ENCODE measurements at regions of chr16 and their contacts with region 1.

Region 1: GRCh38 chr16:28823872-28824716 is 1.3 kb downstream of the ATXN2L start:
- DNase-seq: peak; percentile 97
- ATAC-seq: peak; percentile 91
- H3K4me3 ChIP-seq: peak overlapping the region; percentile 77 to 99 (median 89)
- H3K27ac ChIP-seq: peak overlapping the region; percentile 97
- H3K4me1 ChIP-seq: peaks cover 52% of the 10 kb centered on the region
- H3K27me3 ChIP-seq: no peaks in the 10 kb centered on the region; a peak in 1 of 5 replicates
- CTCF ChIP-seq: peak; percentile 57
- EP300 ChIP-seq: peak in 1 of 2 experiments; percentile 6; a peak in 1 of 4 replicates
- POLR2A ChIP-seq: peak; percentile 71 to 76
- RAD21 ChIP-seq: no peak

Region 2: GRCh38 chr16:28258567-28258966 is 565.5 kb before region 1 on chr16:
- CTCF ChIA-PET with region 1: no interaction called
- POLR2A ChIA-PET with region 1: no interaction called
- in situ Hi-C with region 1: no loop called
- intact Hi-C with region 1: no loop called
- DNase-seq: no peak
- ATAC-seq: no peak; the same call in 1 of the 3 replicates
- H3K4me3 ChIP-seq: no peak overlapping the region
- H3K27ac ChIP-seq: no peak overlapping the region
- H3K4me1 ChIP-seq: no peaks in the 10 kb centered on the region
- H3K27me3 ChIP-seq: peaks cover 8 to 53% of the 10 kb centered on the region in 2 experiments; a peak in 4 of 5 replicates
- CTCF ChIP-seq: no peak
- EP300 ChIP-seq: no peak
- POLR2A ChIP-seq: no peak
- RAD21 ChIP-seq: no peak

Region 3: GRCh38 chr16:28835867-28836744 is 12.0 kb after region 1 on chr16:
- CTCF ChIA-PET with region 1: no interaction called
- POLR2A ChIA-PET with region 1: interaction called, 56 read pairs
- in situ Hi-C with region 1: no loop called
- intact Hi-C with region 1: no loop called
- DNase-seq: no peak
- ATAC-seq: peak; percentile 2; the same call in 2 of the 3 replicates
- H3K4me3 ChIP-seq: no peak overlapping the region
- H3K27ac ChIP-seq: no peak overlapping the region
- H3K4me1 ChIP-seq: peaks cover 20% of the 10 kb centered on the region
- H3K27me3 ChIP-seq: no peaks in the 10 kb centered on the region
- CTCF ChIP-seq: no peak
- EP300 ChIP-seq: no peak
- POLR2A ChIP-seq: peak; percentile 12 to 41; a peak in 2 of 4 replicates
- RAD21 ChIP-seq: no peak

Region 4: DNA sequence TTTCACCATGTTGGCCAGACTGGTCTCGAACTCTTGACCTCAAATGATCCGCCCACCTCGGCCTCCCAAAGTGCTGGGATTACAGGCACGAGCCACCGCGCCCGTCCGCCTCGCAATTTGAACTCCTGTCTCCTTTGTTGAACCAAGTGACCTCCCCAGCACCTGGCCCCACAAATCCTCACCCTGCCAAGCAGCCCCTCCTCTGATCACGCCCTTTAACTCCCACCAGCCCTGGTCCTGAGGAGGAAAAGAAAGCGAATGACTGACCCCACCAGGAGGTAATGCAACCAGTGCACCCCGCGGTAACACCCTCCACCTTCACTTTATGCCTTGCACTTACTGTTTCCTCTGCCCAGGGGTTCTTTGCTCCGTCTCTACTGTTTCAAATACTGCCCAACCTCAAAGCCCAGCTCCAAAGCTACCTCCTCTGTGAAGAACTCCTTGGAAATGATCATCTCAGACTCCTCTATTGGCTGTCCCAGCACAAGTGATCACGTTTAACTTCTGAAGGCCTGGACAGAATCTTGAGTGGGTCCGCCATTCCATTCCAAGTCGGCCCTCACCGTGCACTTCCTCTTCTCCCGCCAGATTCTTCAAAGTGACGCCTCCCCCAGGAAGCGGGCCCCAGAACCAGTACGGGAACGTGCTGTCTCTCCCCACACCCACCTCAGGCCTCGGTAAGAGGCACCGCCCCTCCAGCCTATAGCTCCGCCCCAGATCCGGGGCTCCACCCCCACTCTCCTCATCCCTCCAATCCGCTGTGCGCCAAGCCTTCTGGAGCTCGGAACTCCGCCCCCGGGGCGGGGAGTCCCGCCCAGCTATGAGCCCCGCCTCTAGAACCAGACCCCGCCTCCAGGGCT is 112.1 kb after region 1 on chr16:
- CTCF ChIA-PET with region 1: no interaction called
- POLR2A ChIA-PET with region 1: interaction called, 15 read pairs
- in situ Hi-C with region 1: no loop called
- intact Hi-C with region 1: loop called (anchors 5 kb)
- DNase-seq: peak; percentile 88
- ATAC-seq: peak; percentile 93
- H3K4me3 ChIP-seq: peak overlapping the region; percentile 28 to 69 (median 40)
- H3K27ac ChIP-seq: peak overlapping the region; percentile 43
- H3K4me1 ChIP-seq: peaks cover 63% of the 10 kb centered on the region
- H3K27me3 ChIP-seq: no peaks in the 10 kb centered on the region
- CTCF ChIP-seq: peak; percentile 47
- EP300 ChIP-seq: no peak
- POLR2A ChIP-seq: peak; percentile 19 to 40; a peak in 1 of 4 replicates
- RAD21 ChIP-seq: no peak

Region 5: DNA sequence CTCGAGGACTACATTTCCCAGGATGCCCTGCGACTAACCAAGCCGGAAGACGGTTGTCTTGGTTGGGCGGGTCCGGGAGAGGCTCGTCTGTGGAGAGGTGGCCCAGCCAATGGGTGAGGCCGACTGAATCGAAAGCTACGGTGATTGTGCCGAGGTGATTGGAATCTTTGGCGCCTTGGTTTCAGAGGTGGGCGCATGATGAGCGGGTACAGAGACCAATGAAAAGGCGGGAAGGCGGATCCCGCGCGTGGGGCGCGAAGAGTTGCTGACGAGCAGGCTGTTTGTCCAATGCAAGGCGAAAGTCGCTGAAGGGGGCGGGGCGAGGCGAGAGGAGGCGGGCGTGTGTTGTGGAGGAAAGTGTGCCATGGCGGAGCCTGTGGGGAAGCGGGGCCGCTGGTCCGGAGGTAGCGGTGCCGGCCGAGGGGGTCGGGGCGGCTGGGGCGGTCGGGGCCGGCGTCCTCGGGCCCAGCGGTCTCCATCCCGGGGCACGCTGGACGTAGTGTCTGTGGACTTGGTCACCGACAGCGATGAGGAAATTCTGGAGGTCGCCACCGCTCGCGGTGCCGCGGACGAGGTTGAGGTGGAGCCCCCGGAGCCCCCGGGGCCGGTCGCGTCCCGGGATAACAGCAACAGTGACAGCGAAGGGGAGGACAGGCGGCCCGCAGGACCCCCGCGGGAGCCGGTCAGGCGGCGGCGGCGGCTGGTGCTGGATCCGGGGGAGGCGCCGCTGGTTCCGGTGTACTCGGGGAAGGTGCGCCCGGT is 126.7 kb after region 1 on chr16 and contains the start of gene NFATC2IP:
- CTCF ChIA-PET with region 1: no interaction called
- POLR2A ChIA-PET with region 1: interaction called, 15 read pairs
- in situ Hi-C with region 1: no loop called
- intact Hi-C with region 1: no loop called
- DNase-seq: peak; percentile 100
- ATAC-seq: peak; percentile 97
- H3K4me3 ChIP-seq: peak within 1 kb of the TSS; percentile 93 to 99 (median 97)
- H3K27ac ChIP-seq: peak within 1 kb of the TSS; percentile 67
- H3K4me1 ChIP-seq: peaks cover 49% of the 10 kb centered on the region
- H3K27me3 ChIP-seq: no peaks in the 10 kb centered on the region; a peak in 1 of 5 replicates
- CTCF ChIP-seq: no peak
- EP300 ChIP-seq: no peak
- POLR2A ChIP-seq: peak; percentile 63 to 89
- RAD21 ChIP-seq: peak; percentile 28; the same call in 1 of the 2 replicates
- total RNA-seq, gene NFATC2IP: 18.2 and 32.1 TPM in 2 replicates

Region 6: DNA sequence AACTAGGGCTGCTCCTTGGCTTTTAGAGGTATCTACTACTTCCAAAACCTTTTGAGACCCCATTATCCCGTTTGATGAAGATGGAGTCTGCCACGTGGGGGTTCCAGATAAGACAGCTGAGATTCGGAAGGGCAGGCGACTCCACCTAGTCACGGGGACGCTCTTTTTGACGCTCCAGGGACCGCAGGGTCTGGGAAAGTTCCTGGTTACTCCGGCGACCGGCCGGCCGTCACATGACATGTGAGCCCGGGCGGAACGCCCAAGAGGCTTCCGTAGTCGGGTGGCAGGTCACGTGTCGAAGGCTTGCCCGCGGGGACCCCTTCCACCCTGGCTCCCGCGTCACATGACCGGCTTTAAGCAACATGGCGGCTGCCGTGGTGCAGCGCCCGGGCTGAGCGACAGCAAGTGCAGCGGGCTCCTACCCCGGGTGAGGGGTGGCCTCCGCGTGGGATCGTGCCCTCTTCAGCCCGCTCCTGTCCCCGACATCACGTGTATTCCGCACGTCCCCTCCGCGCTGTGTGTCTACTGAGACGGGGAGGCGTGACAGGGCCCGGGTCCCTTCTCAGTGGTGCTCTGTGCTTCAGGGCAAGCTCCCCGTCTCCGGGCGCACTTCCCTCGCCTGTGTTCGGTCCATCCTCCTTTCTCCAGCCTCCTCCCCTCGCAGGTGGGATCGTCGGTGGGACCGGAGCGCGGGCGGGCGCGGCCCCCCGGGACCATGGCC is 150.5 kb after region 1 on chr16 and contains the start of gene SPNS1:
- CTCF ChIA-PET with region 1: no interaction called
- POLR2A ChIA-PET with region 1: interaction called, 10 read pairs
- in situ Hi-C with region 1: no loop called
- intact Hi-C with region 1: no loop called
- DNase-seq: peak; percentile 94
- ATAC-seq: peak; percentile 91
- H3K4me3 ChIP-seq: peak within 1 kb of the TSS; percentile 93 to 100 (median 100)
- H3K27ac ChIP-seq: peak within 1 kb of the TSS; percentile 60
- H3K4me1 ChIP-seq: peaks cover 24% of the 10 kb centered on the region
- H3K27me3 ChIP-seq: no peaks in the 10 kb centered on the region; a peak in 1 of 5 replicates
- CTCF ChIP-seq: peak; percentile 29; the same call in 1 of the 2 replicates
- EP300 ChIP-seq: peak in 1 of 2 experiments; percentile 42; a peak in 1 of 4 replicates
- POLR2A ChIP-seq: peak; percentile 88 to 89
- RAD21 ChIP-seq: peak; percentile 58; the same call in 1 of the 2 replicates
- total RNA-seq, gene SPNS1: 18.3 and 38.8 TPM in 2 replicates

Measured in HepG2 (cell line).